Mammary epithelial cell (primary cell): ENCODE measurements at regions of chr1 and their contacts with region 1.

Region 1: GRCh38 chr1:161258439-161259344 is at the start of gene PCP4L1:
- DNase-seq: peak; percentile 69
- H3K4me3 ChIP-seq: peak within 1 kb of the TSS; percentile 37 to 52 (median 51)
- H3K27ac ChIP-seq: no peak within 1 kb of the TSS
- H3K4me1 ChIP-seq: peaks cover 5% of the 10 kb centered on the region
- H3K27me3 ChIP-seq: peaks cover 11% of the 10 kb centered on the region
- CTCF ChIP-seq: no peak
- total RNA-seq, gene PCP4L1: 0.42 TPM in 1 of 2 donors, not detected in the other

Region 2: DNA sequence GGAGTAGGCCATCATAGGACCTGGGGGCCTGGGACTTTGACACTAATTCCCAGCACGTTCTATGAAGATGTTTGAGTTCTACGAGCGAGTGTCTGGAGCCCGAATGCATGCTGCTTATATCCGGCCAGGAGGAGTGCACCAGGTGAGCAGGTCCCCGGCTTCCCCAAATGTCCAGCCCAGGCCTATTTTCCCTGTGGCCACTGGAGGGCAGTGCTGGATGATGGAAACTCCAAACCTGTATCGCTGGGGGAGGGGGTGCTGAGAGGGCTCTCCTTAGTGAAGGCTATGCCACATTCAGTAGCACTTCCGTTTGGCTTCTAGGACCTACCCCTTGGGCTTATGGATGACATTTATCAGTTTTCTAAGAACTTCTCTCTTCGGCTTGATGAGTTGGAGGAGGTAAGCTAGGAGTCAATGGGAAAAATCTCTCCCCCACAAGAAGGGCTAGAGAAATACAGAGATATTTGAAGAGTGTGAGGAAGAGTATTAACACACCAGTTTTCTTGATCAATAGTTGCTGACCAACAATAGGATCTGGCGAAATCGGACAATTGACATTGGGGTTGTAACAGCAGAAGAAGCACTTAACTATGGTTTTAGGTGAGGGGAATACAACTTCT is 48.8 kb before region 1 on chr1:
- CTCF ChIA-PET with region 1: no interaction called
- dilution Hi-C with region 1: loop called (anchors 5 kb)
- in situ Hi-C with region 1: no loop called
- intact Hi-C with region 1: no loop called
- DNase-seq: peak; percentile 70
- H3K4me3 ChIP-seq: no peak overlapping the region
- H3K27ac ChIP-seq: no peak overlapping the region
- H3K4me1 ChIP-seq: no peaks in the 10 kb centered on the region
- H3K27me3 ChIP-seq: no peaks in the 10 kb centered on the region
- CTCF ChIP-seq: peak; percentile 91 to 96

Region 3: DNA sequence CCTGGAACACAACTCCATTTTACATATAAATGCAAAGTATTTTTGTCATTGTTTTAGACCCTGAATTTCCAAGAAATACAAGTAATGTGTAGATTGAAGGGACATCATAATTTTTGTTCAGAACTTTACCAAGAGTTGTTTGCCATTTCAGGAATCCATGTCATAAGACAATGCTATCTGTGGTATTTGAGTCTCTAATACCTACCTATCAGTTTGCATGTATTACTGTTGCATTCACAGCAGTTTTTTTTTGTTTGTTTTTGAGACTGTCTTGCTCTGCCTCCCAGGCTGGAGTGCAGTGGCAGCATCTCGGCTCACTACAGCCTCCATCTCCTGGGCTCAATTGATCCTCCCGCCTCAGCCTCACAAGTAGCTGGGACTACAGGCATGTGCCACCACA is 33.9 kb after region 1 on chr1:
- CTCF ChIA-PET with region 1: no interaction called
- dilution Hi-C with region 1: no loop called
- in situ Hi-C with region 1: no loop called
- intact Hi-C with region 1: loop called (anchors 2 kb)
- DNase-seq: no peak
- H3K4me3 ChIP-seq: no peak overlapping the region
- H3K27ac ChIP-seq: no peak overlapping the region
- H3K4me1 ChIP-seq: no peaks in the 10 kb centered on the region
- H3K27me3 ChIP-seq: no peaks in the 10 kb centered on the region
- CTCF ChIP-seq: no peak

Region 4: GRCh38 chr1:161305867-161306519 is 47.3 kb after region 1 on chr1:
- CTCF ChIA-PET with region 1: no interaction called
- dilution Hi-C with region 1: no loop called
- in situ Hi-C with region 1: no loop called
- intact Hi-C with region 1: loop called (anchors 5 kb)
- DNase-seq: peak; percentile 42
- H3K4me3 ChIP-seq: peak overlapping the region; percentile 51 to 85 (median 76)
- H3K27ac ChIP-seq: no peak overlapping the region
- H3K4me1 ChIP-seq: peaks cover 11% of the 10 kb centered on the region
- H3K27me3 ChIP-seq: no peaks in the 10 kb centered on the region
- CTCF ChIP-seq: peak; percentile 21 to 54

Region 5: DNA sequence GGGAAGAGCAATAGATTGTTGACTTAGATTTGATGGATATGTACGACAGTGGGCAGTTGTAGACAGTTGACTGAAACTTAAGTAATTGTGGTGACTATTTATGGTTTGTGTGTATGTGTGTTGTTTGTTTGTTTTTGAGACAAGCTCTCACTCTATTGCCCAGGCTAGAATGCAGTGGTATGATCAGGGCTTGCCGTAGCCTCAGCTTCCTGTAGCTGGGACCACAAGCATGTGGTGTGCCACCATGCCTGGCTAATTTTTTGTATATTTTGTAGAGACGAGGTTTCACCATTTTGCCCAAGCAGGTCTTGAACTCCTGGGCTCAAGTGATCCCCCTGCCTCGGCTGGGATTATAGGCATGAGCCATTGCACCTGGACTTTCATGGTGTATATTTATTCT is 65.3 kb after region 1 on chr1:
- CTCF ChIA-PET with region 1: no interaction called
- dilution Hi-C with region 1: loop called (anchors 5 kb)
- in situ Hi-C with region 1: no loop called
- intact Hi-C with region 1: no loop called
- DNase-seq: no peak
- H3K4me3 ChIP-seq: no peak overlapping the region
- H3K27ac ChIP-seq: no peak overlapping the region
- H3K4me1 ChIP-seq: no peaks in the 10 kb centered on the region
- H3K27me3 ChIP-seq: no peaks in the 10 kb centered on the region
- CTCF ChIP-seq: no peak

Region 6: DNA sequence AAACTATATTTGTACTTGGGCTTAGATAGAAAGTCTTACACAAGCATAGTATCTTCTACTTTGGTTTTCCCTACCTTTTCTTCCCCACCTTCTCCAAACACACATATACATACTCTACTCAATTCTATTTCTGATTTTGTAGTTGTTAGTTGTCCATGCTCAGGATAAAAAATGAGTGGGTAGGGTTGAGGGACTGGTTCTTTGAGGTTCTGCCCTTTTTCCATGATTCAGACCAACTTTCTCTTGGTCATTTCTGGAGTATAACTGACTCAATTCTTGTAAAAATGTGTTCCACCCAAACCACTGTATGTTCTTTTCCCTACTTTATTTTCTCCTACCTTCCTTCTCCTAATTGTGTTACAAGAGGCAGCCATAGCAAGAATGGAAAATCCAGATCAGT is 105.6 kb after region 1 on chr1:
- CTCF ChIA-PET with region 1: no interaction called
- dilution Hi-C with region 1: loop called (anchors 5 kb)
- in situ Hi-C with region 1: no loop called
- intact Hi-C with region 1: no loop called
- DNase-seq: no peak
- H3K4me3 ChIP-seq: no peak overlapping the region
- H3K27ac ChIP-seq: no peak overlapping the region
- H3K4me1 ChIP-seq: no peaks in the 10 kb centered on the region
- H3K27me3 ChIP-seq: no peaks in the 10 kb centered on the region
- CTCF ChIP-seq: no peak